GM12878 (cell line): ENCODE measurements at regions of chr13 and their contacts with region 1.

Region 1: DNA sequence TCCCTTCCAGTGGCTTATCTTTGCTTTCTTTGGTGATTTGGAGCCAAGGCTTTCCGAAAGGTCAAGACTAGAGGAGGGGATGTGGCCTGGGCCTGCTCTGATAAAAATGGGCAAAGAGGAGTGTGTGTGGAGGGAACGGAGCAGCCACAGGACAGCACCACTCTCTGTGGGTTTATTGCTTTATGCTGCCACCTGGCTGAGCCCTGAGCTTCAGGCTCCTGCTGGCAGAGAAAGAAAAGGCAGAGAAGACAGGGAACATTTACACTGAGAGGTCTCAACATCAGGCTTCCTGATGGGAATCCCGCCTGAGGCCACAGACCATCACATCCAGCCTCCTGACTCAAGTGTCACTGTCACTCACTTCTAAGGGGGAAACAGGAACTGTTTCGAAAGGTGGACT is 9.2 kb upstream of the GSX1 start:
- DNase-seq: no peak
- ATAC-seq: 0 out of 3 replicates have a peak, but pooled peaks have one; percentile 35
- H3K4me3 ChIP-seq: no peak overlapping the region
- H3K27ac ChIP-seq: no peak overlapping the region
- H3K4me1 ChIP-seq: no peaks in the 10 kb centered on the region
- H3K27me3 ChIP-seq: peaks cover 0 to 3% of the 10 kb centered on the region in 2 experiments; a peak in 2 of 4 replicates
- CTCF ChIP-seq: peak in 2 of 3 experiments; percentile 12 to 47; a peak in 2 of 6 replicates
- EP300 ChIP-seq: no peak
- POLR2A ChIP-seq: no peak
- RAD21 ChIP-seq: peak; percentile 37

Region 2: GRCh38 chr13:27770809-27771208 is 12.3 kb before region 1 on chr13:
- CTCF ChIA-PET with region 1: interaction called, 22 read pairs
- POLR2A ChIA-PET with region 1: no interaction called
- RAD21 ChIA-PET with region 1: no interaction called
- SMC1A ChIA-PET with region 1: interaction called, 19 read pairs
- in situ Hi-C with region 1: no loop called
- intact Hi-C with region 1: no loop called
- DNase-seq: no peak
- ATAC-seq: peak; percentile 86
- H3K4me3 ChIP-seq: no peak overlapping the region
- H3K27ac ChIP-seq: no peak overlapping the region
- H3K4me1 ChIP-seq: peaks cover 3% of the 10 kb centered on the region; the same call in 1 of the 2 replicates
- H3K27me3 ChIP-seq: peaks cover 0 to 1% of the 10 kb centered on the region in 2 experiments; a peak in 1 of 4 replicates
- CTCF ChIP-seq: peak; percentile 59 to 67 (median 64)
- EP300 ChIP-seq: no peak
- POLR2A ChIP-seq: no peak
- RAD21 ChIP-seq: peak; percentile 49